Head of caudate nucleus (tissue), 42 donors: ENCODE measurements at regions of chr13 and their contacts with region 1.

Region 1: GRCh38 chr13:76991796-76992547 is at the start of gene CLN5:
- DNase-seq: peak; percentile 81 to 97 (median 94)

Region 2: DNA sequence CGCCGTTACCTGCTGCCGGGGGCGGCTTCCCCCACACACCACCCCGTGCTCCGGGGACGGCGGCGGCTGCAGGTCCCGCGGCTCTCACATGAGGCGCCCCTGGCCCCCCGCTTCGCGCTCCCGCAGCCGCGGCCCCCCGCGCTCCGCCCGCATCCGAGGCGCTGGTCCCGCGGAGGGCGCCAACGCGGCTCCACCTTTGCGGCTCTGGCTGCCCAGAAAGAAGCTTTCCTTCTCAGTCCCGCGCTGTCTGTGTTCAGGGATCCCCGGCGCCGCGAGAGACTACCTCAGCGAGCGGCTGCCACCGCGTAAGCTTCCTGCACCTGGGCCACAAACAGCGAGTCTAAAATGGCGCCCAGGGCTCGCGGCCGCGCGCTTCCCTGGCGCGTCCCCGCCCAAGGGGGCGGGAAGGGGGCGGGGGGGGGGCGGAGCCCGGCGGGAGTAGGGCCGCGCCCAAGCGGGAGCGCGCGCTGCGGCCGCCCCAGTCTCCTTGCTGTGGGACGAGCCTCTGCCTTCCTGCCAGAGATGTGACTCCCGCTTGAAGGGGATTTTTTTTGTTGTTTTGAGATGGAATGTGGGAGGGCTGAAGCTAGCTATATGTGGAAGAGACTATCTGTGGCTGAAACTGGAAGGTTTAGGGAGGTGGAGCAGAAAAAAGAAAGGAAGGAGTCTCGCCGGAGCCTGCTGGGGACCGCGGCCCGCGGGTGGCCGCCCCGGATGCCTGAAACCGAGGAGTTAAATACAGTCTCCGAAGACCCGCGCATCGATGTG is 35.0 kb after region 1 on chr13 and contains the start of gene FBXL3:
- intact Hi-C with region 1: loop called (anchors 2 kb)
- DNase-seq: peak; percentile 69 to 95 (median 87)